Calu3 (cell line): ENCODE measurements at regions of chr12 and their contacts with region 1.

Region 1: GRCh38 chr12:47085815-47086252 is 6.1 kb upstream of the AMIGO2 start:
- DNase-seq: peak; percentile 38
- H3K4me3 Mint-ChIP-seq: no peak overlapping the region
- H3K27ac Mint-ChIP-seq: peak overlapping the region; percentile 90
- H3K4me1 Mint-ChIP-seq: peaks cover 46% of the 10 kb centered on the region
- H3K27me3 Mint-ChIP-seq: no peaks in the 10 kb centered on the region
- CTCF ChIP-seq: no peak

Region 2: DNA sequence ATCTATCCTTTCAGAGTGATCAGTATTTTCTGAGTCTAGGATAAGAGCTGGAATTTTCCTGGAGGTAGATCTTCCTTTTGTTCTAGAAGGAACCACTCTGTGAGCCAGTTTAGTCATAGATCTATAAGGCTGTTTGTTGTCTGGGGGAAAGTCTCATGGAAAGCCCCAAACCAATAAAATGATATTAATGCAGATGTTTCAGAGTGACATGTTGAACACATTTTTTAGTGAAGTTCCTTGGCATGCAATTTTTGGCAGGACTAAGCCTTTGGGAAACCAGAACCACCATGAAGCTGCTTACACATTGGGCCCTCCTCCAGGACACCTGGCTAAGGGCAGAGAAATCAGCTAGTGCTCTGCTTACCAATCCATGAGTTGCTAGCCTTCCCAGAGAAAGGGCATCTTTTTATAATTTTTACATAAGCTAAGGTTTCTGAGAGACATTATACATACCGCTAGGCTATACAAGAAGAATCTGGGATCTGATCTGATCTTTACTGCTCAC is 107.9 kb before region 1 on chr12:
- CTCF ChIA-PET with region 1: no interaction called
- intact Hi-C with region 1: no loop called
- DNase-seq: no peak
- H3K4me3 Mint-ChIP-seq: no peak overlapping the region
- H3K27ac Mint-ChIP-seq: no peak overlapping the region
- H3K4me1 Mint-ChIP-seq: no peaks in the 10 kb centered on the region
- H3K27me3 Mint-ChIP-seq: no peaks in the 10 kb centered on the region
- CTCF ChIP-seq: no peak

Region 3: GRCh38 chr12:46998811-46999368 is 86.9 kb before region 1 on chr12:
- CTCF ChIA-PET with region 1: no interaction called
- intact Hi-C with region 1: no loop called
- DNase-seq: no peak
- H3K4me3 Mint-ChIP-seq: no peak overlapping the region
- H3K27ac Mint-ChIP-seq: no peak overlapping the region
- H3K4me1 Mint-ChIP-seq: no peaks in the 10 kb centered on the region
- H3K27me3 Mint-ChIP-seq: no peaks in the 10 kb centered on the region
- CTCF ChIP-seq: no peak

Region 4: DNA sequence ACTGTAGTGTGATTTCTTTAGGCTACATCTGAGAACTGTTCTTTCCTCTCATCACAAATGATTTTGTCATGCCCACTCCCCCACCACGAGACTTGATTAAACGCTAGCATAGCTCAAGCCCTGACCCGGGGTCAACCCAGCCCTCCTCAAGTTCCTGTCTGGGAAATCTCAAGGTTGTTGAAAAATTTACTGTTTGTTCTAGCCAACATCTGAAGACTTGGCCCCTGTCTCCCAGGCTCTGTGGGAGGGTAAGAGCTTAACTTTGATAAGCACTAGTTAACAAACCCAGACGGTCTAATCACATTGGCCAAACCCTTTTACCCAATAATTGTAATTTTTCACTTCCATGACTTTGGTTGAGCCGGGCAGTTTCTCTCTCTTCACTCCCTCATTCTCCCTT is 80.1 kb after region 1 on chr12:
- CTCF ChIA-PET with region 1: interaction called, 10 read pairs
- intact Hi-C with region 1: no loop called
- DNase-seq: no peak
- H3K4me3 Mint-ChIP-seq: no peak overlapping the region
- H3K27ac Mint-ChIP-seq: no peak overlapping the region
- H3K4me1 Mint-ChIP-seq: peaks cover 22% of the 10 kb centered on the region
- H3K27me3 Mint-ChIP-seq: no peaks in the 10 kb centered on the region
- CTCF ChIP-seq: no peak

Region 5: GRCh38 chr12:47270782-47271664 is 185.2 kb after region 1 on chr12:
- CTCF ChIA-PET with region 1: interaction called, 9 read pairs
- intact Hi-C with region 1: loop called (anchors 2 kb)
- DNase-seq: peak; percentile 53
- H3K4me3 Mint-ChIP-seq: peak overlapping the region; percentile 47
- H3K27ac Mint-ChIP-seq: peak overlapping the region; percentile 100
- H3K4me1 Mint-ChIP-seq: peaks cover 60% of the 10 kb centered on the region
- H3K27me3 Mint-ChIP-seq: no peaks in the 10 kb centered on the region
- CTCF ChIP-seq: no peak

Region 6: GRCh38 chr12:48286665-48287064 is 1200.8 kb after region 1 on chr12:
- CTCF ChIA-PET with region 1: no interaction called
- intact Hi-C with region 1: no loop called
- DNase-seq: no peak
- H3K4me3 Mint-ChIP-seq: no peak overlapping the region
- H3K27ac Mint-ChIP-seq: no peak overlapping the region
- H3K4me1 Mint-ChIP-seq: no peaks in the 10 kb centered on the region
- H3K27me3 Mint-ChIP-seq: no peaks in the 10 kb centered on the region
- CTCF ChIP-seq: no peak